HCT116 (cell line): ENCODE measurements at regions of chr14 and their contacts with region 1.

Region 1: GRCh38 chr14:31510222-31510621 is 22.4 kb upstream of the GPR33 start:
- DNase-seq: peak; percentile 27
- ATAC-seq: peak; percentile 55
- H3K4me3 ChIP-seq: no peak overlapping the region
- H3K27ac ChIP-seq: no peak overlapping the region
- H3K4me1 ChIP-seq: no peaks in the 10 kb centered on the region
- H3K27me3 ChIP-seq: no peaks in the 10 kb centered on the region
- CTCF ChIP-seq: peak; percentile 27 to 80 (median 67); a peak in 5 of 6 replicates
- POLR2A ChIP-seq: no peak
- RAD21 ChIP-seq: peak; percentile 76

Region 2: DNA sequence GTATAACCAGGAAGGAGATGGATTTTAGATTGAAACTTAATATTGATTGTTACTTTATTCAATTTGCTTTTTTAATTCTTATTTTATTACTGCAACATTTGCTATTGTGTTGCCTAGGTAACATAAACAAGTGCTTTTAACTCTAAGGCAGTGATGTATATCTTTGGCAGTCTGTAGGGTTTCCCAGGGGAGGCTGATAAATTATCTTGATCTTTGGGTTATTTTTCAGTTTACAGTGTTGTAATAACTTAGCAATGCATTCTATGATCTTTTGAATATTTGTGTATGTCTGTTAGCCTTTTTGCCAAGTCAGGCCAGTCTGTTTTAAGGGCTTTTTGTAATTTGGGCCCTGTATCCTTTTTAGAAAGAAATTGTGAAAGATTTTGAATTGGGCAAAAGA is 45.1 kb before region 1 on chr14:
- CTCF ChIA-PET with region 1: no interaction called
- POLR2A ChIA-PET with region 1: no interaction called
- RAD21 ChIA-PET with region 1: no interaction called
- intact Hi-C with region 1: no loop called
- DNase-seq: no peak
- ATAC-seq: no peak
- H3K4me3 ChIP-seq: no peak overlapping the region
- H3K27ac ChIP-seq: no peak overlapping the region
- H3K4me1 ChIP-seq: no peaks in the 10 kb centered on the region
- H3K27me3 ChIP-seq: no peaks in the 10 kb centered on the region
- CTCF ChIP-seq: no peak
- POLR2A ChIP-seq: no peak
- RAD21 ChIP-seq: no peak

Region 3: DNA sequence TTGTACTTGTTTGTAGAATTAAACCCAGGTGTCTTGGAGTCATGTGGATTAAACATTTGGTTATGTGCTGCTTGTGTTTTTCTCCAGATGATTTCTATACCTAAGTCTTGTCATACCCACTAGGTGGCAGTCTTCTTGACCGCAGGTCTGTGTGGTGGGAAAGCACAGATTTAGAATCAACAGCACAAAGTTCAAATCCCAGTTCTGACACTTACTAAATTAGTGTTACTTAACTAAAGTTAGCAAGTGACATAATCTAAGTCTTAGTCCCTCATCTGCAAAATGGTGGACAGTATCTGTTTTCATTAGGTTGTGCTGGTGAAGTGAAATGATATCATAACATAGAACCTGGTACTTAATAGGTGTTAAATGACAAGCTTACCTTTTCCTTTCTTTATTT is 415.9 kb after region 1 on chr14:
- CTCF ChIA-PET with region 1: interaction called, 3 read pairs
- POLR2A ChIA-PET with region 1: no interaction called
- RAD21 ChIA-PET with region 1: no interaction called
- intact Hi-C with region 1: loop called (anchors 10 kb)
- DNase-seq: peak; percentile 54
- ATAC-seq: peak; percentile 84
- H3K4me3 ChIP-seq: no peak overlapping the region
- H3K27ac ChIP-seq: no peak overlapping the region
- H3K4me1 ChIP-seq: peaks cover 0 to 18% of the 10 kb centered on the region in 2 experiments; a peak in 2 of 4 replicates
- H3K27me3 ChIP-seq: no peaks in the 10 kb centered on the region
- CTCF ChIP-seq: peak; percentile 52 to 80 (median 72); a peak in 5 of 6 replicates
- POLR2A ChIP-seq: no peak
- RAD21 ChIP-seq: peak; percentile 57